BJ (cell line): ENCODE measurements at regions of chr11 and their contacts with region 1.

Region 1: DNA sequence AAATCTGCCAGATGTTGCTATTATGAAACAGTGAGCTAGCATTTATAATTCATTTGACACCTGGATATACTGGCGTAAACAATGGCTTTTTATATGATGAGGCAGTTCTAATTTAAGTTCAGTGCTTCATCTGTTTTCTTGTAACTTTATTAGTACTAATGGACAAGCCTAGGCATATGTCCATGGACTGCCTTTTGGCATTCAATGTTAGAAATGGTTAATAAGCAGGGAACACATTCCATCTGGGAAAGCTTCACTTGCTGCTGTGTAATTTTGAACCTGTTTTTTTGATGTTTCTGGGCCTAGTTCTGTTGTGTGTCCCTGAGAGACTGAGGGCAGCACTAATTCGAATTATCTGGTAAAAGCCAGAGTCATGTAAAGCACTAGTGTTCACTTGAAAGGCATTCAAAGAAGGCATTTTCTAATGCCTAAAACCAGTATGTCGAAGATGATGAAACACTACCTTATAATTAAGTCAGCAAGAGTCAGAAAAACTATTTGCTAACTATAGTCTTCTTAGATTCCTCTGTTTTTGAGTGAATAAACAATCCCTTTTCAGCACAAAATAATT is 138.5 kb downstream of the SWAP70 start:
- DNase-seq: peak; percentile 97
- H3K4me3 ChIP-seq: no peak overlapping the region
- H3K27me3 ChIP-seq: no peaks in the 10 kb centered on the region
- CTCF ChIP-seq: no peak

Region 2: DNA sequence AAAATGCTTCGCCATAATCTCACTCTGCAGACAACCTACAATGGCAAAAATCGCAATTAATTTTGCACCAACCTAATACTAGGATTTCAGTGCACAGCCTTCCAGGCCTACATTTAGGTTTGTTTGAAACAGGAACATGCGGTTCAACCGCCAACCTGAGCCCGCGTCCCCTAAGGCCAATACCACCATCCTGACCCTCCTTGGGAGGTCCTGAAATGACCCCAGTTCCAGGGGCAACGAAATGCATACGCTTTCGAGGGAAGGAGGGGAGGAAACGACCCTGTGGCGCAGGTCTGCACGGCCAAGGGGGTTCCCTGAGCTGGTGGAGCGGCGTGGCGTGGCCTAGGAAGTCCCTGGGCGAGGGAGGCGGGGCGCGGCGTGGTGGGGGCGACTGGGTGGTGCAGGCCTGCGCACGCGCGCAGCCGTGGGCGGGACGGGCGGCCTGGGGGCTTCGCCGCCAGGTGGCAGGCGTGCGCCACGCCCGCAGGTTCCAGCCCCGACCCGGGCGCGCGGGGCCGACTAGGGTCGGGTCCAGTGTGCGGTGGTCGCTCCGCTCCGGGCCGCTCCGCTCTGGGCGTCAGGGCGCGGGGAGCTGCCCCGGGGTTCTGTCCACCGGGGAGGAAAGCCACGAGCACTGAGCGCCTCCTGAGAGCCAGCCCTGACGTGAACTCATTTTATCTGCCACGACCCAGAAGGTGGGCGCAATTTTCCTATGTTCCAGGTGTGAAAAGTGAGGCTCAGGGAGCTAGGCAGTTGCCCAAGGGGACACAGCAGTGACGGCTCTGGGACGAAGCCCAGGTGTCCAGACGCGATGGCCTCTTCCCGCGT is 44.4 kb before region 1 on chr11:
- CTCF ChIA-PET with region 1: interaction called, 18 read pairs
- POLR2A ChIA-PET with region 1: interaction called, 26 read pairs
- DNase-seq: no peak
- H3K4me3 ChIP-seq: peak overlapping the region; percentile 30
- H3K27me3 ChIP-seq: no peaks in the 10 kb centered on the region
- CTCF ChIP-seq: no peak; the same call in 1 of the 2 replicates

Region 3: DNA sequence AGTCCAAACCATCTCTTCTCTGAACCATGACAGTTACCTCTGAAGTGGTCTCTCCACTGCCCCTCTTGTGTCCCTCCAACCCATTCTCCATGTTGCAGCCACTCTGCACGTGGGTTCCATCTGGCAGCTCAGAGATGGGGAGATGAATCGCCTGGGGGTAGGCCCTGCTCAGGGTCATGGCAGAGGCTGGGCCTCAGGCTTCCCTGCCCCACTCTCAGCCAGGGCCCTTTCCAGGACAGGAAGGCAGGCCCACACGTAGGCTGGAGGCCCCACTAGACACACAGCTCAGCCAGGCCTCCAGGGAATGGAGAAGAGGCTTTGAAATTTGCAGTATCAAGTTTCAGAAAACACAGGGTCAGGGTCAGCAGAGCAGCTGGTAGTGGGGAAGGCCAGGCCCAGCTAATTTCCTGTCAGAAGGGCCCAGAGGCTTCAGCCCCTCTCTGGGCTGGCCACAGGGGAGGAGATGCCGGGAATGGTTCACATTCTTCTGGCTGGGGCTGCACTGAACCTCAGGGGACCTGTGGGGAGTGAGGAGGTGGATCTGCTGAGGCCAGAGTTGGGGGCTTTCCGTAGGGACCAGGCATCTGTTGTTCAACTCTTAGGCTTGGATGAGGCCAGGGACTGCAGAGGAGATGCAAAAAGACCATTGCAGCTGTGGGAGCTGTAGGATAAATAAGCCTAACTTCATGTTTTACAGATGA is 36.9 kb before region 1 on chr11:
- CTCF ChIA-PET with region 1: interaction called, 18 read pairs
- POLR2A ChIA-PET with region 1: interaction called, 26 read pairs
- DNase-seq: peak; percentile 73
- H3K4me3 ChIP-seq: no peak overlapping the region
- H3K27me3 ChIP-seq: no peaks in the 10 kb centered on the region
- CTCF ChIP-seq: no peak

Region 4: DNA sequence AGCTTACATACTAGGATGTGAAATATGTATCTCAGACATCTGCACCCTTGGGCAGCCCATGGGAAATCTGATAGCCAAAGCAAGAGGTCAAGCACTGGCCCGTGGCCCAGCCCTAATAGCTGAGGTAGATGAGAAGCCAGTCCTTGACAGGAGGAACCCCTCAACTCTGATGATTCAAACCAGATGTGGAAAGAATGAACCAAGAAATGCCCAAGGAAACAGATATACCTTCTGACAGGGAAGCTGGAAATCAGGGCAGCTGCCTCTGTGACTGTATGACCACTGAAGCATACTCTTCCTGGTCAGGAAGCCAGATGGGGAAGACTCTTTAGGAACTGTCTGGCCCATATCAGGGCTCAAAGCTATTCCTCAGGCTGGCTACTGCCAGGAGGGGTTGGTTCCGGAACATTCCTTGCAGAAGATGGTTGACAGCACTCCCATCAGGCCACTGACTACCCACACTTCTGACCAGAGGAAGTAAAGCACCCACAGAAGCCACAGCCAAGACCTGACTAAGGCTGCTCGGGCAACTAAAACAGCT is 14.3 kb before region 1 on chr11:
- CTCF ChIA-PET with region 1: interaction called, 4 read pairs
- POLR2A ChIA-PET with region 1: interaction called, 11 read pairs
- DNase-seq: peak; percentile 70
- H3K4me3 ChIP-seq: no peak overlapping the region
- H3K27me3 ChIP-seq: no peaks in the 10 kb centered on the region
- CTCF ChIP-seq: no peak

Region 5: DNA sequence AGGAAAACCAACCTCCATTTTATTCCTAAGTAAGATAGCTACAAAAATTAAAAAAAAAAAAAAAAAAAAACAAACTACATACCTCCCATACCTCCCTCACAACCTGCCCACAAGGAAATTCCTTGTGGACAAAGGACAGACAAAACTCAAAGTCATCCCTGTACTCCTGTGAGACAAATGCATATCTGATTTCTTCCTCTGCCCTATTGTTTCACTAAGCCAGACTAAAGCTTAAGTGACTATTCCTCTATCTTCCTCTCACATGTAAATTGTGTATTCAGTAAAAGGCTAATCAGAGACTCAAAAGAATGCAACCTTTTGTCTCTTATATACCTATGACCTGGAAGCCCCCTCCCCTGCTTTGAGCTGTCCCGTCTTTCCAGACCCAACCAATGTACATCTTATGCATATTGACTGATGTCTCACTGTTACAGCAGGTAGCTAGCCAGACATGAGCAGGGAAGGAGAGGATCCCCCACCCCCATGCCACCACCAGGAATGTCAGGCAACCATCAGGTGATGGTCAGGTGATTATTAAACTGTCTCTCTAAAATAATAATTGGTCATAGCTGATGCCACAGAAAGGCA is 202.2 kb after region 1 on chr11:
- CTCF ChIA-PET with region 1: no interaction called
- POLR2A ChIA-PET with region 1: no interaction called
- DNase-seq: no peak
- H3K4me3 ChIP-seq: no peak overlapping the region
- H3K27me3 ChIP-seq: no peaks in the 10 kb centered on the region
- CTCF ChIP-seq: no peak

Region 6: GRCh38 chr11:10436224-10436623 is 633.8 kb after region 1 on chr11:
- CTCF ChIA-PET with region 1: no interaction called
- POLR2A ChIA-PET with region 1: interaction called, 10 read pairs
- DNase-seq: no peak
- H3K4me3 ChIP-seq: no peak overlapping the region
- H3K27me3 ChIP-seq: no peaks in the 10 kb centered on the region
- CTCF ChIP-seq: no peak